ENCODE measurements at regions of chr20 and their contacts with region 1.

Region 1: DNA sequence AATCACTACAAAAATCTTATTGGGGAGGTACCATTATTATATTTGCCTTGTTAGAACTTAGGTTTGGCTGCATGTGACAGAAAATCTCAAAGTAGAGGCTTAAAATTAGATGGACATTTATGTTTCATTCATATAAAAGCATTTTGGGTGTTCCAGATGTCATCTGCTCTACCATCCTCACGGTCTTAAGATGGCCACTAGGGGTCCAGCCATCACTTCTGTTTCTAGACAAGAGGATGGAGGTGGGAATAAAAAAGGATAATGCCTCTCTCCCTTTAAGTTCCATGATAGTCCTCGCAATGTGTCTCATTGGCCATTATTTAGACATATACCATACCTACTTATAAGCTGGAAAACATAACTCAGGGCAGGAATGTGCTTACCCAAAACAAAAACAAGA is 929.5 kb downstream of the KIF16B start:
- DNase-seq: peak; percentile 33
- H3K4me3 Mint-ChIP-seq: no peak overlapping the region
- H3K27ac Mint-ChIP-seq: no peak overlapping the region
- H3K4me1 Mint-ChIP-seq: no peaks in the 10 kb centered on the region
- H3K27me3 Mint-ChIP-seq: no peaks in the 10 kb centered on the region
- CTCF ChIP-seq: peak; percentile 38

Region 2: GRCh38 chr20:15564981-15565380 is 78.7 kb before region 1 on chr20:
- CTCF ChIA-PET with region 1: no interaction called
- POLR2A ChIA-PET with region 1: no interaction called
- intact Hi-C with region 1: no loop called
- DNase-seq: no peak
- H3K4me3 Mint-ChIP-seq: no peak overlapping the region
- H3K27ac Mint-ChIP-seq: no peak overlapping the region
- H3K4me1 Mint-ChIP-seq: no peaks in the 10 kb centered on the region
- H3K27me3 Mint-ChIP-seq: no peaks in the 10 kb centered on the region
- CTCF ChIP-seq: no peak

Region 3: GRCh38 chr20:15654208-15654645 is 10.5 kb after region 1 on chr20:
- CTCF ChIA-PET with region 1: interaction called, 19 read pairs
- POLR2A ChIA-PET with region 1: no interaction called
- intact Hi-C with region 1: no loop called
- DNase-seq: peak; percentile 64
- H3K4me3 Mint-ChIP-seq: no peak overlapping the region
- H3K27ac Mint-ChIP-seq: no peak overlapping the region
- H3K4me1 Mint-ChIP-seq: no peaks in the 10 kb centered on the region
- H3K27me3 Mint-ChIP-seq: no peaks in the 10 kb centered on the region
- CTCF ChIP-seq: peak; percentile 67

Region 4: DNA sequence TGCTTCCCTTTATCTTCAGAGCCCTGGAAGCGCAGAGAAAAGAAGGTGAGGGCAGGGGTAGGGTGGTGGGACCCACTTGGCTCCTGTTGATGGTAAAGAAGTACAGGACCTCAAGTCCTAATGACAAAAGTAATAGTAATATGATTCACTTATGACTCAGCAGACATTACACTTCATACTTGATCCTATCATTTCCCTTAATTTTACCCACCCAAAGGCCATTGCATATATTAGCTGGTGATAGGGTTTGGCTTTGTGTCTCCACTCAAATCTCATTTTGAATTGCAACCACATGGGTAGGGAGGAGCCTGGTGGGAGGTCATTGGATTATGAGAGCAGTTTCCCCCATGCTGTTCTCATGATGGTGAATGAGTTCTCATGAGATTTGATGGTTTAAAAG is 48.9 kb after region 1 on chr20:
- CTCF ChIA-PET with region 1: no interaction called
- POLR2A ChIA-PET with region 1: no interaction called
- intact Hi-C with region 1: no loop called
- DNase-seq: no peak
- H3K4me3 Mint-ChIP-seq: no peak overlapping the region
- H3K27ac Mint-ChIP-seq: no peak overlapping the region
- H3K4me1 Mint-ChIP-seq: no peaks in the 10 kb centered on the region
- H3K27me3 Mint-ChIP-seq: no peaks in the 10 kb centered on the region
- CTCF ChIP-seq: no peak

Region 5: GRCh38 chr20:15818651-15819071 is 174.9 kb after region 1 on chr20:
- CTCF ChIA-PET with region 1: no interaction called
- POLR2A ChIA-PET with region 1: no interaction called
- intact Hi-C with region 1: no loop called
- DNase-seq: peak; percentile 65
- H3K4me3 Mint-ChIP-seq: no peak overlapping the region
- H3K27ac Mint-ChIP-seq: no peak overlapping the region
- H3K4me1 Mint-ChIP-seq: peaks cover 27% of the 10 kb centered on the region
- H3K27me3 Mint-ChIP-seq: no peaks in the 10 kb centered on the region
- CTCF ChIP-seq: no peak

Measured in MCF 10A (cell line).